ENCODE measurements at regions of chr7 and their contacts with region 1.

Region 1: GRCh38 chr7:49643321-49643720 is 130.1 kb upstream of the VWC2 start:
- DNase-seq: no peak
- H3K4me3 ChIP-seq: no peak overlapping the region
- H3K4me3 Mint-ChIP-seq: no peak overlapping the region
- H3K27ac Mint-ChIP-seq: no peak overlapping the region
- H3K4me1 ChIP-seq: no peaks in the 10 kb centered on the region
- H3K4me1 Mint-ChIP-seq: no peaks in the 10 kb centered on the region
- H3K27me3 ChIP-seq: no peaks in the 10 kb centered on the region
- H3K27me3 Mint-ChIP-seq: peaks cover 4% of the 10 kb centered on the region
- CTCF ChIP-seq: no peak

Region 2: GRCh38 chr7:49670991-49671390 is 27.7 kb after region 1 on chr7:
- CTCF ChIA-PET with region 1: no interaction called
- POLR2A ChIA-PET with region 1: no interaction called
- intact Hi-C with region 1: no loop called
- DNase-seq: no peak
- H3K4me3 ChIP-seq: no peak overlapping the region
- H3K4me3 Mint-ChIP-seq: no peak overlapping the region
- H3K27ac Mint-ChIP-seq: no peak overlapping the region
- H3K4me1 ChIP-seq: no peaks in the 10 kb centered on the region
- H3K4me1 Mint-ChIP-seq: no peaks in the 10 kb centered on the region
- H3K27me3 ChIP-seq: no peaks in the 10 kb centered on the region; the same call in 1 of the 2 replicates
- H3K27me3 Mint-ChIP-seq: peaks cover 7% of the 10 kb centered on the region
- CTCF ChIP-seq: no peak

Region 3: GRCh38 chr7:49707891-49708290 is 64.6 kb after region 1 on chr7:
- CTCF ChIA-PET with region 1: no interaction called
- POLR2A ChIA-PET with region 1: no interaction called
- intact Hi-C with region 1: loop called (anchors 10 kb)
- DNase-seq: no peak
- H3K4me3 ChIP-seq: no peak overlapping the region
- H3K4me3 Mint-ChIP-seq: no peak overlapping the region
- H3K27ac Mint-ChIP-seq: no peak overlapping the region
- H3K4me1 ChIP-seq: no peaks in the 10 kb centered on the region
- H3K4me1 Mint-ChIP-seq: no peaks in the 10 kb centered on the region
- H3K27me3 ChIP-seq: no peaks in the 10 kb centered on the region
- H3K27me3 Mint-ChIP-seq: peaks cover 12% of the 10 kb centered on the region
- CTCF ChIP-seq: no peak

Measured in Caco-2 (cell line).